ENCODE measurements at regions of chr13 and their contacts with region 1.

Region 1: GRCh38 chr13:28401303-28402056 is 93.4 kb downstream of the FLT1 start:
- DNase-seq: peak in 1 of 9 experiments; percentile 14
- ATAC-seq: no peak
- H3K4me3 ChIP-seq: no peak overlapping the region
- H3K4me3 Mint-ChIP-seq: no peak overlapping the region
- H3K27ac ChIP-seq: no peak overlapping the region
- H3K27ac Mint-ChIP-seq: no peak overlapping the region
- H3K4me1 ChIP-seq: no peaks in the 10 kb centered on the region
- H3K4me1 Mint-ChIP-seq: no peaks in the 10 kb centered on the region
- H3K27me3 ChIP-seq: no peaks in the 10 kb centered on the region
- H3K27me3 Mint-ChIP-seq: no peaks in the 10 kb centered on the region
- CTCF ChIP-seq: no peak

Region 2: GRCh38 chr13:28220166-28220565 is 181.3 kb before region 1 on chr13:
- CTCF ChIA-PET with region 1: no interaction called
- POLR2A ChIA-PET with region 1: no interaction called
- intact Hi-C with region 1: no loop called
- DNase-seq: no peak
- ATAC-seq: no peak
- H3K4me3 ChIP-seq: no peak overlapping the region
- H3K4me3 Mint-ChIP-seq: no peak overlapping the region
- H3K27ac ChIP-seq: no peak overlapping the region
- H3K27ac Mint-ChIP-seq: no peak overlapping the region
- H3K4me1 ChIP-seq: no peaks in the 10 kb centered on the region
- H3K4me1 Mint-ChIP-seq: peaks cover 9% of the 10 kb centered on the region
- H3K27me3 ChIP-seq: no peaks in the 10 kb centered on the region
- H3K27me3 Mint-ChIP-seq: no peaks in the 10 kb centered on the region
- CTCF ChIP-seq: no peak

Region 3: DNA sequence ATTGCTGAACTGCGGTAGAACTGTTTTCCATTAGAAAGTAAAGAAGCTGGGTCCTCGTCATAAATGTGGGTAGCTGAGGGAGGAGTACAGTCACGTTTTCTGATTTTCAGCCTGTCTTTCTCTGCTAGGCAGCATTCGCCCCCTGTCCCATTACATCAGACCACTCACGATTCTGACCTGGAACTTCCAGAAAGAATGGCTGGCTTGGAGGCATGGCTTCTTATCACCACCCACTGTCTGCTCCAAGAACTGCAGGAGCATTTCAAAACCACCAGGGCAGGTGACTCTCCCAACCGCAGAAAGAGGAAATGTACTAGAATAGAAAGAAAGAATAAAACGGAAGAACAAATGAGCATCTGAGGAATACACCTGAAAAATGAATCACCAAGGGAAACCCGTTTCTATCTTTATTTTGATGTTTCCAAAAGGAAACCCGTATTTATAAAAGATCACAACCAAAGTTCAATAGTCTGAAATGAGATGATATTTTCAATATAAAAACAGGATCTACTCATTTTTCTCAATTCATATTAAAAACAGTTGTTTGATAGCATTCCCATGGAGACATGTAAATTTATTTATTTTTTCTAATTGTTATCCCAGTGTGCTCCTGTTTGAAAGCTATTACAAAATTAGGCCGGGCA is 235.3 kb after region 1 on chr13:
- CTCF ChIA-PET with region 1: no interaction called
- POLR2A ChIA-PET with region 1: no interaction called
- intact Hi-C with region 1: loop called in 1 of 2 experiments (anchors 10 kb)
- DNase-seq: peak in 7 of 9 experiments; percentile 16 to 78 (median 53)
- ATAC-seq: peak; percentile 93
- H3K4me3 ChIP-seq: no peak overlapping the region
- H3K4me3 Mint-ChIP-seq: peak overlapping the region; percentile 0
- H3K27ac ChIP-seq: no peak overlapping the region
- H3K27ac Mint-ChIP-seq: peak overlapping the region; percentile 0
- H3K4me1 ChIP-seq: no peaks in the 10 kb centered on the region
- H3K4me1 Mint-ChIP-seq: peaks cover 10% of the 10 kb centered on the region
- H3K27me3 ChIP-seq: no peaks in the 10 kb centered on the region
- H3K27me3 Mint-ChIP-seq: peaks cover 9% of the 10 kb centered on the region
- CTCF ChIP-seq: peak; percentile 62

Measured in CD8-positive, alpha-beta T cell (primary cell).